H1 (cell line): ENCODE measurements at regions of chr1 and their contacts with region 1.

Region 1: GRCh38 chr1:92994105-92994712 is 32.9 kb upstream of the DIPK1A start:
- DNase-seq: no peak
- H3K4me3 ChIP-seq: no peak overlapping the region
- H3K27ac ChIP-seq: no peak overlapping the region
- H3K4me1 ChIP-seq: no peaks in the 10 kb centered on the region
- H3K27me3 ChIP-seq: no peaks in the 10 kb centered on the region
- CTCF ChIP-seq: peak in 2 of 3 experiments; percentile 80 to 88; a peak in 3 of 4 replicates
- EP300 ChIP-seq: no peak
- POLR2A ChIP-seq: no peak
- RAD21 ChIP-seq: peak; percentile 91 to 93

Region 2: DNA sequence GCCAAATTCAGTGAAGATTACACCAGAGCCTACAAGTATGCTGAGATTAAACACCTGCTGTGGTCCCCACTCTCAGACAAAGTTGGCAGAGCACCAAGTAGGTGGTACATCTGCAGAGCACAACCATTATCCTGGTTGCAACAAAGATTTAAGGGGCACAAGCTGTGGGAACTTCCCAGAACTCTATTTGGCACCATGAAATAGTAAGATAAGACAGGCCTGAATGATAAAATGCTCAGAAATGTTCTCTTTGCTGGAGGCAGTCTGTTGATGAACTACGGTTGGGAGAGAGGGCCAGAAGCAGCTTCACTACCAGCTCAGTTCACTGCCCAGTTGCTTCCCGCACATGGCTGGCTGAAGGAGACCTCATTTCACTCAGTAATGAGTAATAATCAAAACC is 142.5 kb before region 1 on chr1:
- CTCF ChIA-PET with region 1: interaction called, 15 read pairs
- POLR2A ChIA-PET with region 1: no interaction called
- DNase-seq: no peak
- H3K4me3 ChIP-seq: no peak overlapping the region
- H3K27ac ChIP-seq: no peak overlapping the region
- H3K4me1 ChIP-seq: no peaks in the 10 kb centered on the region
- H3K27me3 ChIP-seq: no peaks in the 10 kb centered on the region
- CTCF ChIP-seq: no peak
- EP300 ChIP-seq: no peak
- POLR2A ChIP-seq: no peak
- RAD21 ChIP-seq: no peak

Region 3: DNA sequence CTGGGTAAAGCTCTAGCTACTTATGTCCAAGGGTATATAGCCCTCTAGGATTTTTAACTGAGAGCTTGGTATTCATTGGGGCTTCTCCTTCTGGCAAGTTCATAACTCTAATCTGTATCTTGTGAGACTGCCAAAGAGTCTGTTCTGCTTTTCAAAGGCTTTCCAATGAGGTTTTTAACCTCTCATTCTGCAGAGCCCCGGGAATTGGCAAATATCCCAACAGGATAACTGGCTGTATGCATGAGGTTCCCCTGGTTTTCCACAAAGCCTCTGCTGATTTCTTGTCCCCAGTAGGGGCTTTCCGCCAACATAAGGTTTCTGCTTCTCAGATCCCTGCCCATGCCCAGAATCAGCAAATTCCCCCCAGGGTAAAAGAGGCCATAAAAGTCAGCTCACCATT is 121.5 kb before region 1 on chr1:
- CTCF ChIA-PET with region 1: interaction called, 18 read pairs
- POLR2A ChIA-PET with region 1: no interaction called
- DNase-seq: no peak
- H3K4me3 ChIP-seq: no peak overlapping the region
- H3K27ac ChIP-seq: no peak overlapping the region
- H3K4me1 ChIP-seq: no peaks in the 10 kb centered on the region; a peak in 1 of 7 replicates
- H3K27me3 ChIP-seq: no peaks in the 10 kb centered on the region
- CTCF ChIP-seq: no peak
- EP300 ChIP-seq: no peak
- POLR2A ChIP-seq: no peak
- RAD21 ChIP-seq: no peak

Region 4: DNA sequence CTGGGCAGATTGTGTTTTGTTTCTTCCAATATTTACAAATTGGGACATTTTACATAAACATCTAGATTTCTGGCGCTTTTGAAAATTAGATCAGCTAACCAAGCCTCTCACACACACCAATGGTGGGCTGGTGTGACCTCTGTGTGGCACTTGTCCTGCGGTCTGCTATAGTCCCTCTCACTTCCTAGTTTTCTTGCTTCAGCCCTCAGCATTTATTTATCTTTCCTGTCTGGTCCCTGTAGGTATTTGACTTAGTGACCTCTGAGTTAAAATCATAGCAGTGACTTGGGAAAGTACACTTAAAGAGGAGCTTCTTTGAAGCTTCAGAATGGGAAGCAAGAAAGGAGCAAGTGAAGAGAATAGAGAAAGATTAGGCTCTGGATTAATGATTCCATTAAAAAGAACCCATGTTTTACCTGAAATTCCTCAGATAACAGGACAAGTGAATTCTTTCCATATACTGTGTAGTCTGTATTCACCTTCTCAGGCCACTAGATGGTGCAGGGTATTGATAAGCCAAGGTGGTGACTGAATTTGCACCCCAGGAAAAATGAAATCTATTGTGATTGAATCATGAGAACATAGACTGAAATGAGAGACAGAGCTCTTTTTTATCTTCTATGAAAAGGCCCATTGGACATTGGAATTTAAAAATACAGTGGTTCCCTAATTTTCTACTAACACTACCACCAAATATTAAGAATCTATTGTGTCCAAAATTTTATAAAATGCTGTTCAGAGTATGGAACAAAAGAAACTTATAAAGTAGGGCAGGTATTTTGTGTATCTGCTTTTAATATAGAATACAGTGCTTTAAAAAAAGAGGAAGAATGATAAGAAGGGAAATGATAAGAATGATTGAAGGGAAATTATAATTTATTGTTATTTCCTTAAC is 25.8 kb before region 1 on chr1:
- CTCF ChIA-PET with region 1: interaction called, 67 read pairs
- POLR2A ChIA-PET with region 1: no interaction called
- DNase-seq: no peak
- H3K4me3 ChIP-seq: no peak overlapping the region
- H3K27ac ChIP-seq: no peak overlapping the region
- H3K4me1 ChIP-seq: peaks cover 0 to 6% (median 0%) of the 10 kb centered on the region in 4 experiments; a peak in 1 of 7 replicates
- H3K27me3 ChIP-seq: no peaks in the 10 kb centered on the region; a peak in 3 of 7 replicates
- CTCF ChIP-seq: peak in 2 of 3 experiments; percentile 39 to 53; a peak in 2 of 4 replicates
- EP300 ChIP-seq: no peak
- POLR2A ChIP-seq: no peak
- RAD21 ChIP-seq: peak; percentile 55 to 60; a peak in 3 of 4 replicates

Region 5: DNA sequence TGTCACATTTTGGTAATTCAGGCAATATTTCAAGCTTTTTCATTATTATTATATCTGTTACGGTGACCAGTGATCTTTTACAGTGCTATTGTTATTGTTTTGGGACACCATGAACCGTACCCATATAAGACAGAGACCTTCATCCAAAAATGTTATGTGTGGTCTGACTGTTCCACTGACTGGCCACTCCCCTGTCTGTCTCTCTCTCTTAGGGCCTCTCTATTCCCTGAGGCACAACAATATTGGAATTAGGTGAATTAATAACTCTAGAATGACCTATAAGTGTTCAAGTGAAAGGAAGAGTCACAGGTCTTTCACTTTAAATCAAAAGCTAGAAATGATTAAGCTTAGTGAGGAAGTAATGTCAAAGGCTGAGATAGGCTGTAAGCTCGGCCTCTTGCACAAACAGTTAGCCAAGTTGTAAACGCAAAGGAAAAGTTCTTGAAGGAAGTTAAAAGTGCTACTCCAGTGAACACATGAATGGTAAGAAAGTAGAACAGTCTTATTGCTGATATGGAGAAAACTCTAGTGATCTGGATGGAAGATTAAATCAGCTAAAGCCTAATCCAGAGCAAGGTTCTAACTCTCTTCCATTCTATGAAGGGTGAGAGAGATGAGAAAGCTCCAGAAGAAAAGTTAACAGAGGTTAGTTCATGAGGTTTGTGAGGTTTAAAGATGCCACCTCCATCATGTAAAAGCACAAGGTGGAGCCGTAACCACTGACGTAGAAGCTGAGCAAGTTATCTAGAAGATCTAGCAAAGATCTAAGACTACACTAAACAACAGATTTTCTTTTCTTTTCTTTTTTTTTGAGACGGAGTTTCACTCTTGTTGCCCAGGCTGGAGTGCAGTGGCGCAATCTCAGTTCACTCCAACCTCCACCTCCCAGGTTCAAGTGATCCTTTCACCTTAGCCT is 13.2 kb before region 1 on chr1:
- CTCF ChIA-PET with region 1: interaction called, 22 read pairs
- POLR2A ChIA-PET with region 1: no interaction called
- DNase-seq: no peak
- H3K4me3 ChIP-seq: no peak overlapping the region
- H3K27ac ChIP-seq: no peak overlapping the region
- H3K4me1 ChIP-seq: no peaks in the 10 kb centered on the region
- H3K27me3 ChIP-seq: no peaks in the 10 kb centered on the region
- CTCF ChIP-seq: no peak
- EP300 ChIP-seq: no peak
- POLR2A ChIP-seq: no peak
- RAD21 ChIP-seq: no peak

Region 6: GRCh38 chr1:93015590-93015989 is 21.4 kb after region 1 on chr1:
- CTCF ChIA-PET with region 1: interaction called, 10 read pairs
- POLR2A ChIA-PET with region 1: no interaction called
- DNase-seq: no peak
- H3K4me3 ChIP-seq: no peak overlapping the region
- H3K27ac ChIP-seq: no peak overlapping the region
- H3K4me1 ChIP-seq: peaks cover 0 to 4% (median 0%) of the 10 kb centered on the region in 4 experiments; a peak in 3 of 7 replicates
- H3K27me3 ChIP-seq: no peaks in the 10 kb centered on the region
- CTCF ChIP-seq: no peak
- EP300 ChIP-seq: no peak
- POLR2A ChIP-seq: no peak
- RAD21 ChIP-seq: no peak